ENCODE measurements at regions of chr13 and their contacts with region 1.

Region 1: GRCh38 chr13:39263033-39263432 is 224.8 kb downstream of the NHLRC3 start:
- DNase-seq: peak; percentile 68
- H3K4me3 Mint-ChIP-seq: no peak overlapping the region
- H3K27ac Mint-ChIP-seq: no peak overlapping the region
- H3K4me1 Mint-ChIP-seq: peaks cover 14% of the 10 kb centered on the region
- H3K27me3 Mint-ChIP-seq: peaks cover 6% of the 10 kb centered on the region

Region 2: GRCh38 chr13:38970380-38971051 is 292.5 kb before region 1 on chr13:
- CTCF ChIA-PET with region 1: no interaction called
- intact Hi-C with region 1: loop called (anchors 5 kb)
- DNase-seq: no peak
- H3K4me3 Mint-ChIP-seq: no peak overlapping the region
- H3K27ac Mint-ChIP-seq: no peak overlapping the region
- H3K4me1 Mint-ChIP-seq: no peaks in the 10 kb centered on the region
- H3K27me3 Mint-ChIP-seq: peaks cover 2% of the 10 kb centered on the region

Region 3: GRCh38 chr13:39095500-39095899 is 167.5 kb before region 1 on chr13:
- CTCF ChIA-PET with region 1: no interaction called
- intact Hi-C with region 1: loop called (anchors 1 kb)
- DNase-seq: no peak
- H3K4me3 Mint-ChIP-seq: peak overlapping the region; percentile 30
- H3K27ac Mint-ChIP-seq: peak overlapping the region; percentile 78
- H3K4me1 Mint-ChIP-seq: peaks cover 24% of the 10 kb centered on the region
- H3K27me3 Mint-ChIP-seq: no peaks in the 10 kb centered on the region

Region 4: GRCh38 chr13:39196958-39197646 is 65.9 kb before region 1 on chr13:
- CTCF ChIA-PET with region 1: no interaction called
- intact Hi-C with region 1: loop called (anchors 1 kb)
- DNase-seq: no peak
- H3K4me3 Mint-ChIP-seq: no peak overlapping the region
- H3K27ac Mint-ChIP-seq: peak overlapping the region; percentile 60
- H3K4me1 Mint-ChIP-seq: peaks cover 11% of the 10 kb centered on the region
- H3K27me3 Mint-ChIP-seq: peaks cover 17% of the 10 kb centered on the region

Region 5: GRCh38 chr13:39317291-39317690 is 54.3 kb after region 1 on chr13:
- CTCF ChIA-PET with region 1: no interaction called
- intact Hi-C with region 1: no loop called
- DNase-seq: no peak
- H3K4me3 Mint-ChIP-seq: no peak overlapping the region
- H3K27ac Mint-ChIP-seq: no peak overlapping the region
- H3K4me1 Mint-ChIP-seq: no peaks in the 10 kb centered on the region
- H3K27me3 Mint-ChIP-seq: peaks cover 12% of the 10 kb centered on the region

Region 6: GRCh38 chr13:39616087-39616694 is 353.2 kb after region 1 on chr13:
- CTCF ChIA-PET with region 1: no interaction called
- intact Hi-C with region 1: no loop called
- DNase-seq: peak; percentile 51
- H3K4me3 Mint-ChIP-seq: no peak overlapping the region
- H3K27ac Mint-ChIP-seq: no peak overlapping the region
- H3K4me1 Mint-ChIP-seq: no peaks in the 10 kb centered on the region
- H3K27me3 Mint-ChIP-seq: peaks cover 5% of the 10 kb centered on the region

Region 7: DNA sequence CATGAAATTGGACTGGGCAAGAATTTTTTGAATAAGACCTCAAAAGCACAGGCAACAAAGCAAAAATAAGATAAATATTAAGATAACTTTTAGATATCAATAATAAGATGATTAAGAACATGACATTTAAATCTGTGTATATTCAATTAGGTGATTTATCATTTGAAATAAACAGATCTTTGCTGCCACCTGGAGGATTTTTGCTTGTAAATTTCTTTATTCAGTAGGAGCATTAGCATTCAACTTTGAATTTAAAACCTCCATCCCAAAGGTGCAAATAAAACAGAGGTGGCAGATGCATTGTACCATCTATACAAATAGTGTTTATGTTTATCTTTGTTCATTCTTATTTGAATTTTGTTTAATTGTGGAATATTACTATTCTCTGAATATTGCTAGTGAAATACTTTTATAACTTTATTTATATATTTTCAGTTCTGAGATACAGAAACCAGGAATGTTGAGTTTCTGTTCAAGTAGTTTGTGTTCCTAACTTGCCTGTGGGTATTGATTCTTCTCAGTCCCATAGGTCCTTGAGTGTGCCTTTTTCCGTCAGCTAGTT is 413.4 kb after region 1 on chr13:
- CTCF ChIA-PET with region 1: no interaction called
- intact Hi-C with region 1: loop called (anchors 5 kb)
- DNase-seq: peak; percentile 23
- H3K4me3 Mint-ChIP-seq: no peak overlapping the region
- H3K27ac Mint-ChIP-seq: no peak overlapping the region
- H3K4me1 Mint-ChIP-seq: peaks cover 4% of the 10 kb centered on the region
- H3K27me3 Mint-ChIP-seq: no peaks in the 10 kb centered on the region